Prostate gland (tissue), 2 donors: ENCODE measurements at regions of chr9 and their contacts with region 1.

Region 1: GRCh38 chr9:123914517-123915195 is 15.3 kb downstream of the DENND1A start:
- DNase-seq: no peak
- H3K4me3 ChIP-seq: no peak overlapping the region
- H3K27ac ChIP-seq: no peak overlapping the region
- H3K4me1 ChIP-seq: no peaks in the 10 kb centered on the region
- H3K27me3 ChIP-seq: no peaks in the 10 kb centered on the region
- CTCF ChIP-seq: no peak
- POLR2A ChIP-seq: no peak

Region 2: GRCh38 chr9:123835821-123836220 is 78.8 kb before region 1 on chr9:
- intact Hi-C with region 1: no loop called
- DNase-seq: no peak
- H3K4me3 ChIP-seq: no peak overlapping the region
- H3K27ac ChIP-seq: no peak overlapping the region
- H3K4me1 ChIP-seq: no peaks in the 10 kb centered on the region
- H3K27me3 ChIP-seq: no peaks in the 10 kb centered on the region
- CTCF ChIP-seq: no peak
- POLR2A ChIP-seq: no peak

Region 3: DNA sequence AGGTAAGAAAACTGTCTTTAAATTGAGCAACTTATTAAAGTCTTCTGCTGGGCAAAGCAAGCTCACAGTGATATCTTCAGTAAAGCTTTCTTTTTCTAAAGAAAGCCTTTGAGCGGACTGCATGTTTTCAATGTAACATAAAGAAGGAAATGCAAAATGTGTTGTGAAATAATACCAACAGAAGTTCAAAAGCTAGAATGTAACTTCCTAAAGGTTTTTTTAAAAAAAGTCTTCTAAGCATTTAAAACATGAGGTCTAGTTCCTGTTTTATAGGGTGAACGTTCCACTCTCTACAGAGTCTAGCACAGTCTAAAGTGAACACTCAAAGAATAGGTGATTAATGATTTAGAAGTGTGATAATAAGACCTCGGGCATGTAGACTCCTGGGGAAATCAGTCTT is 47.6 kb before region 1 on chr9:
- intact Hi-C with region 1: loop called (anchors 5 kb)
- DNase-seq: no peak
- H3K4me3 ChIP-seq: no peak overlapping the region
- H3K27ac ChIP-seq: no peak overlapping the region
- H3K4me1 ChIP-seq: no peaks in the 10 kb centered on the region
- H3K27me3 ChIP-seq: no peaks in the 10 kb centered on the region
- CTCF ChIP-seq: no peak
- POLR2A ChIP-seq: no peak